ENCODE measurements at regions of chr17 and their contacts with region 1.

Region 1: DNA sequence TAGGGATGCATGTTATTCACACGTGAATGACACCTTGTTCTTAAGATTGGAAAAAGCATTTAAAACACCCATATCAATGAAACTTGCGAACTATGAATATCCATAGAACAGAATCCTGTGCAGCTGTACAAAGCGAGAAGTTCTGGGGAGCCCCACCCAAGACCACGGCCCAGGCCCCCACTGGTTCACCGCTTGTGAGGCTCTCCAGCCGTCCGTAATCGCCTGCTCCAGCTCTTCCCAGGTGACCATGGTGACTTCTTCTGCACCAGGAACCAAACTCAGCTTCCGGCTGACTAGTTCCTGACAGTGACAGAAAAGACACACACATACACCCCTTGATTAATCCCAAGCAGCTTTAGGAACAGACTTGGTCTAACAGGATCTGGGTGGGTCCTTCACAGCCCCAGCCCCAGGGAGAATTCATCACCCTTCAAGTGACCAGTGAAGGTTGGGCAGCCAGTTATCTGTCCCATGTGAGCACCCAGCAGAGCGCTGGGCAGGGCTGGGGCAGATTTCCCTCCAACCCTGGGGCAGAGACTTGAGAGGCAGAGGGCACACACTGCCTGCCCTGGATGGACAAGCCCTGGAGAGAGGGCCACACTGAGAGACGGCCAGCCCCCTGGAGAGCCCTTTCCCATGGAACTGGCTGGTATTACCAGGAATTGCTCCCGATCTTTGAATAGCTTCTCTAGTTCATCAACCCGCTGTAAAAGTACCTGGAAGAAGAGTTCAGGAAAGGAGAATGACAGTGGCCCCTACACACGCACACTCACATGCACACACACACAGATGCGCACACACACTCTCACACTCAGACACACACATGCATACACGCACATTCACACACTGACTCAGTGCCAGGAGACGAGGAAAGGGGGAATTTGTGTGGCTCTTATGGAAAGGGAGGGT is 3.6 kb downstream of the QRICH2 start:
- DNase-seq: no peak
- H3K4me3 ChIP-seq: no peak overlapping the region
- H3K27ac ChIP-seq: no peak overlapping the region
- H3K4me1 ChIP-seq: no peaks in the 10 kb centered on the region
- H3K27me3 ChIP-seq: no peaks in the 10 kb centered on the region
- CTCF ChIP-seq: no peak

Region 2: GRCh38 chr17:76027159-76027839 is 277.2 kb before region 1 on chr17 and contains the start of gene EVPL:
- CTCF ChIA-PET with region 1: no interaction called
- POLR2A ChIA-PET with region 1: no interaction called
- intact Hi-C with region 1: no loop called
- DNase-seq: peak; percentile 91 to 98
- H3K4me3 ChIP-seq: peak within 1 kb of the TSS; percentile 71
- H3K27ac ChIP-seq: peak within 1 kb of the TSS; percentile 47; the same call in 1 of the 2 replicates
- H3K4me1 ChIP-seq: peaks cover 25% of the 10 kb centered on the region
- H3K27me3 ChIP-seq: no peaks in the 10 kb centered on the region
- CTCF ChIP-seq: no peak
- total RNA-seq, gene EVPL: 60.8 and 77.8 TPM in 2 replicates

Region 3: GRCh38 chr17:76281573-76282371 is 22.7 kb before region 1 on chr17:
- CTCF ChIA-PET with region 1: no interaction called
- POLR2A ChIA-PET with region 1: no interaction called
- intact Hi-C with region 1: no loop called
- DNase-seq: no peak
- H3K4me3 ChIP-seq: no peak overlapping the region
- H3K27ac ChIP-seq: no peak overlapping the region
- H3K4me1 ChIP-seq: peaks cover 8% of the 10 kb centered on the region
- H3K27me3 ChIP-seq: no peaks in the 10 kb centered on the region
- CTCF ChIP-seq: no peak

Region 4: GRCh38 chr17:76384222-76384986 is 79.9 kb after region 1 on chr17 and contains the start of gene SPHK1:
- CTCF ChIA-PET with region 1: interaction called, 3 read pairs
- POLR2A ChIA-PET with region 1: interaction called, 10 read pairs
- intact Hi-C with region 1: no loop called
- DNase-seq: peak; percentile 37 to 78
- H3K4me3 ChIP-seq: peak within 1 kb of the TSS; percentile 68
- H3K27ac ChIP-seq: no peak within 1 kb of the TSS
- H3K4me1 ChIP-seq: peaks cover 4% of the 10 kb centered on the region; the same call in 1 of the 2 replicates
- H3K27me3 ChIP-seq: no peaks in the 10 kb centered on the region
- CTCF ChIP-seq: no peak
- total RNA-seq, gene SPHK1: 5.5 and 9.3 TPM in 2 replicates

Region 5: DNA sequence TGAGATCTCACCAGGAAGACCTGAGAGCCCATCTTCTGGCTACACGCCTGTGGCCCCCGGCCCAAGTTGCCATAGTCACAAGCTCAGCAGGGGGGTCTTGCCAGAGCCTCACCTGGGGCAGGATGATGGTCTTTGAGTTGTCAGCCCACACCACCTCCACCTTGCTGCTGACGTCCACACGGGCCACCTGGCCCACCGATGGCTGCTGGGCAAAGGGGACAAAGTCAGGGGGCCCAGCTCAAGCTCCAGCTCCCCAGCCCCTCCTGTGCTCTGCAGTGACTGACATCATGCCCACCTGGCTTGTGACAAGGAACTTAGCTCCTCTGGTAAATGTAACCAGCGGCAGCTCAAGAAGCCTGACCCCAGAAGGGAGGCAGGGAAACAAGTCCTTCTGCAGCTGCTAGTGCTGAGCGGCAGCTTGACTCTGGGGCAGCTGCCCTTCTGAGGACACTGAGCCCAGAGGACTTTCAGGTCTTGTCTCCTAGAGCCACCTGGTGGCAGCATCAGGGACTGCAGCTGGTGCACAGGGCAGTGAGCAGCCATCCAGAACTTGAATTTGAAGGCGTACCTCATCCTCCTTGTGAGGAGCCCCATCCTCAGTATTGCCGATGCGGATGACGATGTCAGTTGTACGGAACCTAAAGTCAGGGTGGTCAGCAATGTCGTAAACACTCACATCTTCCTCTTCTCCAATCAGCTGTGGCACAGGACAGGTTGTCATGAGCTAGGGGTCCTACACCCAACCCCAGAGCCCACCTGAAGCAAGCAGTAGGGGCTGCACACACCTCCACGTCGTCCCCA is 93.4 kb after region 1 on chr17:
- CTCF ChIA-PET with region 1: interaction called, 11 read pairs
- POLR2A ChIA-PET with region 1: no interaction called
- intact Hi-C with region 1: loop called (anchors 1 kb)
- DNase-seq: peak; percentile 59 to 84
- H3K4me3 ChIP-seq: no peak overlapping the region
- H3K27ac ChIP-seq: no peak overlapping the region
- H3K4me1 ChIP-seq: no peaks in the 10 kb centered on the region
- H3K27me3 ChIP-seq: no peaks in the 10 kb centered on the region
- CTCF ChIP-seq: peak; percentile 89

Region 6: GRCh38 chr17:76506408-76507349 is 202.2 kb after region 1 on chr17:
- CTCF ChIA-PET with region 1: no interaction called
- POLR2A ChIA-PET with region 1: no interaction called
- intact Hi-C with region 1: loop called (anchors 1 kb)
- DNase-seq: peak; percentile 43 to 87
- H3K4me3 ChIP-seq: no peak overlapping the region
- H3K27ac ChIP-seq: no peak overlapping the region
- H3K4me1 ChIP-seq: no peaks in the 10 kb centered on the region
- H3K27me3 ChIP-seq: no peaks in the 10 kb centered on the region
- CTCF ChIP-seq: peak; percentile 86

Region 7: DNA sequence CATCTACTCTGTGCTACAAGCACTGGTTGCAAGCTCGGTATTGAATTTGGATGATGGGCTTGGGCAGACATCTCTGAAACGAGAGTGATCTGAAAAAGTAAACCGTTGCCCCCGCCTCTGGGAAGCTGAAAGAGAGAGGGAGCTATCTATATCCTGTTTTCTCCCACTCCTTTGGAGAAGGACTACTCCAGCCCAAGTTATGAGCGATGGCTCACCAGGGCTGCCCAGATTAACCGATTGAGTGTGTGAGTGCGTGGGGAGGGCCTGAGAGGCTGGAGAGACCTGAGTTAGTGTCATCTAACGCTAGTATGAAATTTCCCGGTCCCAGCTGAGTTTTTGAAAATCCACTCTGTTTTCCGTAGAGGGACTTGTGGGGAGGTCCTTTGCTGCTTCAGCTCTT is 575.2 kb after region 1 on chr17:
- CTCF ChIA-PET with region 1: interaction called, 12 read pairs
- POLR2A ChIA-PET with region 1: no interaction called
- intact Hi-C with region 1: no loop called
- DNase-seq: no peak
- H3K4me3 ChIP-seq: no peak overlapping the region
- H3K27ac ChIP-seq: no peak overlapping the region
- H3K4me1 ChIP-seq: no peaks in the 10 kb centered on the region
- H3K27me3 ChIP-seq: no peaks in the 10 kb centered on the region
- CTCF ChIP-seq: no peak